PC-9 (cell line): ENCODE measurements at regions of chr7 and their contacts with region 1.

Region 1: DNA sequence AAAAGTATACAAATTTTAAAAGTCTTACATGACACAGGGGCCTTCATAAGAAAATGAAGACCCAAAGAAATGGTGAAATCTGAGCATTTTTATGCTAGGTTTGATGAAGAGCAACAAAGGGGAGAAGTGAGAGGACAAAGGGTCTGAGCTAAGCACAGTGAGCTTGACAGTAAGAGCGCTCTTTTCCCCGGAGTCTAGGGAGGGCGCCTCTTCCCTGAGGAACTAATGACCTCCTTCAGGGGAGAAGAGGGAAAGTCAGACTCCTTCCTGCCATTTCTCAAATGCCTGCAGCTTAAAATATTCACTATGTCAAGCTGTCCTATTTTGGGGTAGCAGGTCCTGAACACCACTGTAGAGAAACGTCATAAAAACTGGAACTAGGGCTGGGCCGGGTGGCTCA is 18.1 kb upstream of the PAXIP1 start:
- DNase-seq: no peak
- H3K4me3 ChIP-seq: no peak overlapping the region
- H3K27ac ChIP-seq: no peak overlapping the region
- H3K4me1 ChIP-seq: no peaks in the 10 kb centered on the region
- H3K27me3 ChIP-seq: peaks cover 69% of the 10 kb centered on the region
- CTCF ChIP-seq: no peak

Region 2: DNA sequence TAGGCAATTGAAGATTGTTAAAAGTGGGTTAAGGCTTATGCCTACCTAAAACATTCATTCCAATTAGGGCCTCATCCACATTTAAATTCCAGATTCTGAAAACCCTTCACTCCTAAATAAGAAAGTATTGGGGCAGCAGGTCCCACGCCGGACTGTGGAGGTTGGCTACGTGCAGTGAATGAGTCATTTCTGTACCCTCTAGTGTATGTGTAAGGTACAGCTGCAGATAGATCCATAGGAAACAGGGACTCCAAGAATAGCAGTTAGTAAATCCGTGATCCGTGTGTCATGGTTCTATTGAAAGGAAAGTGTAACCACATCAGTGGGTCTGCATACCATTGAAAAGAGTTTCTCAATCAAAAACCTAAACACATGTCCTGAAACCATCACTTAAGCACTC is 819.5 kb before region 1 on chr7:
- CTCF ChIA-PET with region 1: no interaction called
- POLR2A ChIA-PET with region 1: no interaction called
- intact Hi-C with region 1: no loop called
- DNase-seq: no peak
- H3K4me3 ChIP-seq: no peak overlapping the region
- H3K27ac ChIP-seq: no peak overlapping the region
- H3K4me1 ChIP-seq: no peaks in the 10 kb centered on the region
- H3K27me3 ChIP-seq: peaks cover 83% of the 10 kb centered on the region
- CTCF ChIP-seq: no peak

Region 3: DNA sequence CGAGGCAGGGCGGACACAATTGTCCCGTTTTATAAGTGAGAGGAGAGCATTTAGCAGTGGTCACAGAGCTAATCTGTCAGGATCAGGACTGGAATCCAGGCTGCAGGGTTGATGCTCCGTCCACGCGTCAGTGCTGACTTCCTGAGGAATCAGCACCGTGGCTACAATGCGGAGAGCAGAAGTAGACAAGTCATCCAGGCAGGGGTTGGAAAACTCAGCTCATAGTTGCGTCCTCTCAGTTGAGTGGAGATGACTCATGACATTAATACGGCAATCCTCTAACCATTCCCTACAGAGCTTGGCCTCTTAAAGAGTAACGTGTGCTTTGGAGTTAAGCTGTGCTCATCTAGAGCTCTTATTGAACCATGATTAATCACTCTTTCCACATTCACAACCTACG is 32.0 kb after region 1 on chr7:
- CTCF ChIA-PET with region 1: interaction called, 11 read pairs
- POLR2A ChIA-PET with region 1: no interaction called
- intact Hi-C with region 1: no loop called
- DNase-seq: no peak
- H3K4me3 ChIP-seq: no peak overlapping the region
- H3K27ac ChIP-seq: no peak overlapping the region
- H3K4me1 ChIP-seq: no peaks in the 10 kb centered on the region
- H3K27me3 ChIP-seq: peaks cover 92% of the 10 kb centered on the region
- CTCF ChIP-seq: no peak